ENCODE measurements at regions of chr21 and their contacts with region 1.

Region 1: DNA sequence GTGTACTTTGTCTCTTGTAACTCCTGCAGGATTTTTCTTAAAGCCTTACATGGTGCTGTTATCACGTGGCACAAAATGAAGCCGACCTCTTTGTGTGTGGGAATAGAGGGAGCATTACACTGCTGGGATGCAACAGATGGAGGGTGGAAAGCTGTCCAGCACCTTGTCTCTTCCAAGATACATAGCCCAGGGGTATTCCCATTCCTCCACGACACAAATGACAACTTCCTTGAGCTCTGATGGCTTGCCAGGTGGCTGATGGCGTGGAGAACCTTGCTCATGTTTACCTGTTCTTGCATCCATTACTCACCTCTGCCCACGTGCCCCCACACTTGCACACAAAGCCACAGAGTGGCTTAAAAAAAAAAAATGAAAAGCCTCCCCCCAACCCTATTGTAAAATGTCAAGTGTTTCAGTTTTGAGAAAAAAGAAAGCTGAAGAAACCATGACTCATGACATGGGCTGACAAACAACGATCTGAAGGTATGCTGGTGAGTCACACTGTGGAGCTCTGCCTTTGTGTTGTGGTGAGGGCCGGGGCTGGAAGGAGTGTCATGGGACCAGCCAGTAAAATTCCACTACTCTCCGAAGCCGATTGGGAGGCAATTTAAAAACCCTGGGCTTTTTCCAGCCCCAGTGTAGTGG is 32.0 kb upstream of the ATP5PO start:
- DNase-seq: peak; percentile 86 to 97 (median 91)
- H3K4me3 ChIP-seq: peak overlapping the region; percentile 21 to 36
- H3K4me3 Mint-ChIP-seq: peak overlapping the region; percentile 49 to 94 (median 85)
- H3K27ac ChIP-seq: peak overlapping the region; percentile 94
- H3K27ac Mint-ChIP-seq: peak overlapping the region; percentile 92 to 99 (median 98)
- H3K4me1 ChIP-seq: peaks cover 79% of the 10 kb centered on the region
- H3K4me1 Mint-ChIP-seq: peaks cover 58 to 90% (median 68%) of the 10 kb centered on the region in 4 donors
- H3K27me3 ChIP-seq: no peaks in the 10 kb centered on the region
- H3K27me3 Mint-ChIP-seq: no peaks in the 10 kb centered on the region

Region 2: DNA sequence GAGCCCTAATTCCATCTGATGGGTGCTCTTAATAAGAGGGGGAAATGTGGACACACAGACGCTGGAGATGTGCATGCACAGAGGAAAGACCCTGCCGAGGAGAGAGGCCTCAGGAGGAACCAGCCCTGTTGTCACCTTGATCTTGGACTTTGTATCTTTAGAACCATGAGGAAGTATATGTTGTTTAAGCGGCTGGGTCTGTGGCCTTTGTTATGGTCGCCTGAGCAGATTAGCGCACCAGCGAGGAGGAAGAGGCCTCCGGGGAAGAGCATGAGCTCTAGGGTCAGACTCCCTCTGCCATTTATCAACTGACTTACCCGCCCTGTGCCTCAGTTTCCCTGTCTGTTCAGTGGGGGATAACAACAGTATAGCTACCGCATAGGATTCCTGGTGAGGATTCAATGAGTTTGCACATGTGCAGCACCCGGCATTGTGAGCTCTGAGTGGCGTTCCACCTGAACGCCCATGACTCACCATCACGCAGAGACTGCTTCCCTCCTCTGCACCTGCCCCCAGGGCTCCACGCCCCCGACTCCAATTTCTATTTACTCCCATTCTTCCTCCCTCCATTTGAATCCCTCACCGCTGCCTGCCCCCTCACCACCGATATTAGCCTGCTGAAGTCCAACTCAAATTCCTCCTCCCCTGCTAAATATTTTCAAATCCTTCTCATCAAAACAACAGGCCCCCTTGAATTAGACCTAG is 99.2 kb before region 1 on chr21:
- CTCF ChIA-PET with region 1: no interaction called
- POLR2A ChIA-PET with region 1: no interaction called
- intact Hi-C with region 1: no loop called
- DNase-seq: no peak
- H3K4me3 ChIP-seq: no peak overlapping the region
- H3K4me3 Mint-ChIP-seq: no peak overlapping the region
- H3K27ac ChIP-seq: no peak overlapping the region
- H3K27ac Mint-ChIP-seq: no peak overlapping the region
- H3K4me1 ChIP-seq: no peaks in the 10 kb centered on the region
- H3K4me1 Mint-ChIP-seq: no peaks in the 10 kb centered on the region
- H3K27me3 ChIP-seq: no peaks in the 10 kb centered on the region
- H3K27me3 Mint-ChIP-seq: peaks cover 0 to 8% of the 10 kb centered on the region in 2 donors

Region 3: GRCh38 chr21:33924079-33924765 is 23.4 kb before region 1 on chr21:
- CTCF ChIA-PET with region 1: interaction called, 123 read pairs
- POLR2A ChIA-PET with region 1: interaction called, 141 read pairs
- intact Hi-C with region 1: loop called (anchors 2 kb)
- DNase-seq: peak; percentile 80 to 86 (median 82)
- H3K4me3 ChIP-seq: no peak overlapping the region
- H3K4me3 Mint-ChIP-seq: peak overlapping the region in 3 of 8 donors; percentile 13 to 26 (median 23)
- H3K27ac ChIP-seq: no peak overlapping the region
- H3K27ac Mint-ChIP-seq: peak overlapping the region; percentile 12 to 91 (median 67)
- H3K4me1 ChIP-seq: peaks cover 8% of the 10 kb centered on the region
- H3K4me1 Mint-ChIP-seq: peaks cover 6 to 12% (median 9%) of the 10 kb centered on the region in 4 donors
- H3K27me3 ChIP-seq: no peaks in the 10 kb centered on the region
- H3K27me3 Mint-ChIP-seq: no peaks in the 10 kb centered on the region

Region 4: DNA sequence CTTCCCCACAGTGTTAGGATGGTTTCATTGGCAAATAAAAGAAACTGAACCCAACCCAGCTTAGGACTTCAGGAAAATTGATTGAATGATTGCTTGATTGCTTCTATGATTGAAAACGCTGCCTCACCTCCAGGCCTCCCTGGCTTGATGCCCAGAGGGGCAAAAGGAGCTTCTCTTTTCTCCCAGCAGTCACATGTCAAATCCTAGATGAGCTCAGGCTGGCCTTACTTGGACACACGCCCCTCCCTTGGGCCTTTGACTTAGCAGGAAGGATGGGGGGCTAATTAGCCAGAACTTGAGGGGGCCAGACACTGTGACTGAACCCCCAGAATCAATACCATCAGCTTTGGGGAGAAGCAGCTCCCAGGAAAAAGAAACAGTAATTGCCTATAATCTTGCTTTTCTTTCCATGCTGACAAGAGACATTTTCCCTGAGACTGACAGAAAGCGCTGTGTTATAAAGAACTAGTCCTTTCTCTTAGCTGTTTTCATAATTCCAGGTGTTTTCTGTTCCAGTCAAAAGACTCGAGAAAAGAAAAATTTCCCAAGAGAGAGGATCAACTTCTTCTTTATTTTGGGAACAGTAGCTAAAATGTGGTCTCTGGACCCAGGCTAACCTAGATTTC is 18.9 kb after region 1 on chr21:
- CTCF ChIA-PET with region 1: interaction called, 7 read pairs
- POLR2A ChIA-PET with region 1: interaction called, 230 read pairs
- intact Hi-C with region 1: no loop called
- DNase-seq: no peak
- H3K4me3 ChIP-seq: no peak overlapping the region
- H3K4me3 Mint-ChIP-seq: no peak overlapping the region
- H3K27ac ChIP-seq: no peak overlapping the region
- H3K27ac Mint-ChIP-seq: peak overlapping the region in 1 of 7 donors; percentile 41
- H3K4me1 ChIP-seq: no peaks in the 10 kb centered on the region
- H3K4me1 Mint-ChIP-seq: peaks cover 12 to 42% (median 24%) of the 10 kb centered on the region in 4 donors
- H3K27me3 ChIP-seq: no peaks in the 10 kb centered on the region
- H3K27me3 Mint-ChIP-seq: no peaks in the 10 kb centered on the region

Region 5: DNA sequence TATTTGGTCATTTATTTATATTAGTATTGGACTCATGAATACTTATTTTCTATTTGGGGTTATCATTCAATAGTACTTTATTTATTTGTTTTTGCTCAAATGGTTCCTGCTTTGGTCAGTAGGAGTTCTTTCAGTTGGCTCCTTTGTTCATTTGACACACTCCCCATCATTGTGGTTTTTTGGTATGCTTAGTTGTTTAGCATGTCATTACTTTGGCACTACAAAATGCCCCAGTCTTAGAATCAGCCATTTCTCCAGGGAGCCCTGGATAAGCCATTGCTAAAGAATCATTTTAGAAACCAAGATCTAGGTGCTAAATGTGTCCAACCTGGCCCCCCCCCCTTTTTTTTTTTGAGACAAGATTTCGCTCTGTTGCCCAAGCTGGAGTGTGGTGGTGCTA is 64.1 kb after region 1 on chr21:
- CTCF ChIA-PET with region 1: no interaction called
- POLR2A ChIA-PET with region 1: no interaction called
- intact Hi-C with region 1: no loop called
- DNase-seq: no peak
- H3K4me3 ChIP-seq: no peak overlapping the region
- H3K4me3 Mint-ChIP-seq: no peak overlapping the region
- H3K27ac ChIP-seq: no peak overlapping the region
- H3K27ac Mint-ChIP-seq: no peak overlapping the region
- H3K4me1 ChIP-seq: no peaks in the 10 kb centered on the region
- H3K4me1 Mint-ChIP-seq: peaks cover 4 to 12% (median 9%) of the 10 kb centered on the region in 4 donors
- H3K27me3 ChIP-seq: no peaks in the 10 kb centered on the region
- H3K27me3 Mint-ChIP-seq: no peaks in the 10 kb centered on the region

Region 6: GRCh38 chr21:34022627-34023335 is 75.2 kb after region 1 on chr21:
- CTCF ChIA-PET with region 1: interaction called, 3 read pairs
- POLR2A ChIA-PET with region 1: interaction called, 34 read pairs
- intact Hi-C with region 1: no loop called
- DNase-seq: peak in 1 of 5 donors; percentile 14
- H3K4me3 ChIP-seq: no peak overlapping the region
- H3K4me3 Mint-ChIP-seq: no peak overlapping the region
- H3K27ac ChIP-seq: no peak overlapping the region
- H3K27ac Mint-ChIP-seq: no peak overlapping the region
- H3K4me1 ChIP-seq: peaks cover 29% of the 10 kb centered on the region
- H3K4me1 Mint-ChIP-seq: peaks cover 11 to 26% (median 13%) of the 10 kb centered on the region in 4 donors
- H3K27me3 ChIP-seq: no peaks in the 10 kb centered on the region
- H3K27me3 Mint-ChIP-seq: no peaks in the 10 kb centered on the region

Region 7: DNA sequence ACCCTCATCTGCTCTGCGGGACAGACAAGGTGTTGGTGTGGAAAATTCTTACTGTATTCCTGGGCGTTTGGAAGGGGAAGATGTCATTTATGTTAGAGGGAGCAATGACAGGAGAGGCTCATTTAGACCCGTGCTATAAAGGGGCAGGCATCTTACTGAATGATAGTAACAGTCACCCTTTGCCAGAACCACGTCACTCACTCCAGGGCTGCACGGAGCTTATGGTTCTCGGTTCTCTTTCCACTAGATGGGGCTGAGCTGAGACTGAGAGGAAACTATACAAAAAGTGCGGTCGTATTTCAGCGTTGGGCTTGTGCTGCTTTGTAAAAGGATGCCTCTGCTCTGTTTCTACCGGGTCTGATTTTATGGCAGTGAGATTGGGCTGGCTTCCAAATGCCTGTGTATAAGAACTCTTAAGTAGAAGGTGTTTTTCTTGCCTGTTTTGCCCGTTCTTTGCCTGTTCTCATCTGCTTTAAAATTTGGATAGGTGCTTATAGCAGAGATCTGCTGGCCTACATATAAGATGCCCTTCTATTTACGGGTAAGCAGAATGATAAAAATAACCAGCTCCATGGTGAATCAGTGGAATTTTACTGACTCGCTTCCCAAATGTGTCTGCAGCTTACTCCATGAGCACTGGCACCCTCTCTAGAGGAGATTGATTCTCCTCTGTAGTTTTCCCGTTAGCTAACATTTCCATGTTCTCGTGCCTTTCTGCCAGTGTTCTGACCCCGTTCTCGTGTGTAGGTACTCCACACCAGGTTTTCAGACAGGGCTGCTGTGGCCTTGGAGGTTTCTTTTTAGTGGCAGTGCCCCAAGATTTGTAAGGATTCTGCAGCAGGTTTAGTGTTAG is 181.7 kb after region 1 on chr21:
- CTCF ChIA-PET with region 1: no interaction called
- POLR2A ChIA-PET with region 1: interaction called, 9 read pairs
- intact Hi-C with region 1: loop called (anchors 1 kb)
- DNase-seq: peak; percentile 58 to 75 (median 65)
- H3K4me3 ChIP-seq: no peak overlapping the region
- H3K4me3 Mint-ChIP-seq: peak overlapping the region in 7 of 8 donors; percentile 40 to 80 (median 67)
- H3K27ac ChIP-seq: no peak overlapping the region
- H3K27ac Mint-ChIP-seq: peak overlapping the region; percentile 71 to 93 (median 86)
- H3K4me1 ChIP-seq: peaks cover 52% of the 10 kb centered on the region
- H3K4me1 Mint-ChIP-seq: peaks cover 66 to 95% (median 80%) of the 10 kb centered on the region in 4 donors
- H3K27me3 ChIP-seq: no peaks in the 10 kb centered on the region
- H3K27me3 Mint-ChIP-seq: no peaks in the 10 kb centered on the region